ENCODE measurements at regions of chr18 and their contacts with region 1.

Region 1: GRCh38 chr18:33653231-33653630 is 75.2 kb downstream of the ASXL3 start:
- DNase-seq: no peak
- H3K4me3 Mint-ChIP-seq: no peak overlapping the region
- H3K27ac Mint-ChIP-seq: no peak overlapping the region
- H3K4me1 Mint-ChIP-seq: no peaks in the 10 kb centered on the region
- H3K27me3 Mint-ChIP-seq: no peaks in the 10 kb centered on the region

Region 2: GRCh38 chr18:33596178-33596854 is 56.9 kb before region 1 on chr18:
- CTCF ChIA-PET with region 1: no interaction called
- POLR2A ChIA-PET with region 1: no interaction called
- intact Hi-C with region 1: loop called (anchors 10 kb)
- DNase-seq: no peak
- H3K4me3 Mint-ChIP-seq: no peak overlapping the region
- H3K27ac Mint-ChIP-seq: no peak overlapping the region
- H3K4me1 Mint-ChIP-seq: no peaks in the 10 kb centered on the region
- H3K27me3 Mint-ChIP-seq: no peaks in the 10 kb centered on the region